ENCODE measurements at regions of chr11 and their contacts with region 1.

Region 1: GRCh38 chr11:8964324-8965320 is at the start of gene TMEM9B:
- DNase-seq: peak; percentile 84
- ATAC-seq: peak; percentile 82
- H3K4me3 Mint-ChIP-seq: peak within 1 kb of the TSS; percentile 96
- H3K27ac Mint-ChIP-seq: peak within 1 kb of the TSS; percentile 92
- H3K4me1 Mint-ChIP-seq: peaks cover 35% of the 10 kb centered on the region
- H3K27me3 Mint-ChIP-seq: no peaks in the 10 kb centered on the region
- CTCF ChIP-seq: no peak
- total RNA-seq, gene TMEM9B: 29.0 and 29.6 TPM in 2 replicates

Region 2: DNA sequence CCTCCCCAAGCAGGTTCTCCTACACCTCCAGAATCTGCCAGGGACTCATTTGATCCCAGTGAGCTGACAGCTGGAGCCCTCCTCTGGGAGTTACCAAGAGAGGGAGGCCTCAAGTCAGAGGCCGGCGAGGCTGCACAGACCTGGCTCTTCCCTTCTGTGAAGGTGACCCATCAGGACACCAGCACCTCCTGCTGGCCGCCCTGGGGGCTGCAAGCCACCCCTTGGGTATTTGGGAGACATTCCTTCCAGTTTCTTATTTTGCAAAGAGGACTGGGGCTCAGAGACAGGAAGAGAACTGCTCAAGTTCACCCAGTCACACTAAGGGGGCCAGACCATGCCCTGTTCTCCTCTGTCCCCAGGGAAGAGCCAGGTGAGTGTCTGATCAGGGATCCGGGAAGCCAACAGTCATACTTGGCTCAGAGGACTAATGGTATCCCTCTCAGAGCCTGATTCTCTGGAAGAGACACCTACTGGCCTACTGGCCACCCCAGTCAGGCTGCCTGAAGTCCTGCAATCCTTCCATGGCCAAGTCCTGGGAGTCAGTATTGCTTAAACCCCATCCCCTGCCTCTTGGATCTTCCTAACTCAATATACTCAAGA is 755.3 kb before region 1 on chr11:
- CTCF ChIA-PET with region 1: no interaction called
- POLR2A ChIA-PET with region 1: interaction called, 8 read pairs
- intact Hi-C with region 1: loop called (anchors 10 kb)
- DNase-seq: peak; percentile 65
- ATAC-seq: peak; percentile 55
- H3K4me3 Mint-ChIP-seq: no peak overlapping the region
- H3K27ac Mint-ChIP-seq: peak overlapping the region; percentile 46
- H3K4me1 Mint-ChIP-seq: peaks cover 36% of the 10 kb centered on the region
- H3K27me3 Mint-ChIP-seq: no peaks in the 10 kb centered on the region
- CTCF ChIP-seq: peak; percentile 81

Region 3: GRCh38 chr11:8328848-8329330 is 635.7 kb before region 1 on chr11:
- CTCF ChIA-PET with region 1: no interaction called
- POLR2A ChIA-PET with region 1: no interaction called
- intact Hi-C with region 1: loop called (anchors 5 kb)
- DNase-seq: peak; percentile 59
- ATAC-seq: peak; percentile 74
- H3K4me3 Mint-ChIP-seq: peak overlapping the region; percentile 46
- H3K27ac Mint-ChIP-seq: no peak overlapping the region
- H3K4me1 Mint-ChIP-seq: peaks cover 27% of the 10 kb centered on the region
- H3K27me3 Mint-ChIP-seq: peaks cover 8% of the 10 kb centered on the region
- CTCF ChIP-seq: no peak

Region 4: GRCh38 chr11:8682303-8683114 is 282.1 kb before region 1 on chr11 and contains the starts of genes RPL27A and TRIM66:
- CTCF ChIA-PET with region 1: interaction called, 3 read pairs
- POLR2A ChIA-PET with region 1: interaction called, 20 read pairs
- intact Hi-C with region 1: loop called (anchors 1 kb)
- DNase-seq: peak; percentile 99
- ATAC-seq: peak; percentile 94
- H3K4me3 Mint-ChIP-seq: peak within 1 kb of the TSS; percentile 94
- H3K27ac Mint-ChIP-seq: peak within 1 kb of the TSS; percentile 96
- H3K4me1 Mint-ChIP-seq: peaks cover 45% of the 10 kb centered on the region
- H3K27me3 Mint-ChIP-seq: no peaks in the 10 kb centered on the region
- CTCF ChIP-seq: no peak
- total RNA-seq, gene RPL27A: 1,592 and 2,225 TPM in 2 replicates
- total RNA-seq, gene TRIM66: 12.4 and 13.3 TPM in 2 replicates

Region 5: GRCh38 chr11:8813658-8814057 is 151.0 kb before region 1 on chr11:
- CTCF ChIA-PET with region 1: no interaction called
- POLR2A ChIA-PET with region 1: no interaction called
- intact Hi-C with region 1: loop called (anchors 5 kb)
- DNase-seq: peak; percentile 29
- ATAC-seq: peak; percentile 77
- H3K4me3 Mint-ChIP-seq: no peak overlapping the region
- H3K27ac Mint-ChIP-seq: no peak overlapping the region
- H3K4me1 Mint-ChIP-seq: peaks cover 10% of the 10 kb centered on the region
- H3K27me3 Mint-ChIP-seq: peaks cover 10% of the 10 kb centered on the region
- CTCF ChIP-seq: peak; percentile 23

Region 6: DNA sequence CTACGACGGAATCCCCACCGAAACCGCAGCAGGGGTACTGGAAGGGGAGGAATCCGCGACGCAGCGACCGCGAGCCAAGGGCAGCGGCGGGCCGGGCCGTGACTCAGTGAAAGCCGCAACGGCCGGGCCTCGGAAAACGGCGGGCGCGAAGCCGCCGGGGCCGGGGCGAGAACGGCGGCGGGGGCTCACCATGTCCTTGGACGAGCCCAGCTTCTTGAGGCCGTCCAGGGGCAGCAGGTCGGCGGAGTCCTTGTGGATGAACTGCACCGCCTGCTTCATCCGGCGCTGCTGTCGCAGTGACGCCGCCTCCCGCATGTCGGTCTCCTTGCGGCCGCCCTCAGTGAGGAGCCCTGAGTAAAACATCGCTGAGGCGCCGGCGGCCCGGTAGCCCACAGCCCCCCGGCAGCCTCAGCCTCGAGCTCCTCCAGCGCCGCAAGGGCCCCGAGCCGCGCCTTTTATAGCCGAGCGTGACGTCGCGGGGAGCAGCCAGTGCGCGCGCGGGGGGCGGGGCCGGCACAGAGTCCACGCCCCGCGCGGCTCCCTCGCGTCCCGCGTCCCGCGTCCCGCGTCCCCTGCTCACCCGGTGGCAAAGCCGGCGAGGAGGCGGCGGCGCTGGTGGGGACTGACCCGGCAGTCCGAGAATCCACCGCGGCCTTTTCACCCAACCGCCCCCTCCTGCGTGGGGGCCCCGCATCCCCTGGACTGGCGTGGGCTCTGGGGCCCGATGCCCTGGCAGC is 39.1 kb after region 1 on chr11 and contains the start of gene NRIP3:
- CTCF ChIA-PET with region 1: no interaction called
- POLR2A ChIA-PET with region 1: interaction called, 6 read pairs
- intact Hi-C with region 1: loop called (anchors 2 kb)
- DNase-seq: peak; percentile 66
- ATAC-seq: peak; percentile 86
- H3K4me3 Mint-ChIP-seq: peak within 1 kb of the TSS; percentile 77
- H3K27ac Mint-ChIP-seq: no peak within 1 kb of the TSS
- H3K4me1 Mint-ChIP-seq: peaks cover 15% of the 10 kb centered on the region
- H3K27me3 Mint-ChIP-seq: peaks cover 40% of the 10 kb centered on the region
- CTCF ChIP-seq: no peak
- total RNA-seq, gene NRIP3: 0.32 TPM in 1 of 2 replicates, not detected in the other

Region 7: GRCh38 chr11:9384535-9385303 is 420.1 kb after region 1 on chr11 and contains the start of gene IPO7:
- CTCF ChIA-PET with region 1: no interaction called
- POLR2A ChIA-PET with region 1: interaction called, 7 read pairs
- intact Hi-C with region 1: loop called (anchors 1 kb)
- DNase-seq: peak; percentile 75
- ATAC-seq: peak; percentile 98
- H3K4me3 Mint-ChIP-seq: peak within 1 kb of the TSS; percentile 94
- H3K27ac Mint-ChIP-seq: peak within 1 kb of the TSS; percentile 90
- H3K4me1 Mint-ChIP-seq: peaks cover 36% of the 10 kb centered on the region
- H3K27me3 Mint-ChIP-seq: no peaks in the 10 kb centered on the region
- CTCF ChIP-seq: no peak
- total RNA-seq, gene IPO7: 95.7 and 96.3 TPM in 2 replicates